Posterior cingulate gyrus (tissue), 11 donors: ENCODE measurements at regions of chrX and their contacts with region 1.

Region 1: GRCh38 chrX:138745196-138745595 is 33.7 kb upstream of the FGF13 start:
- DNase-seq: peak in 1 of 10 donors; percentile 2

Region 2: DNA sequence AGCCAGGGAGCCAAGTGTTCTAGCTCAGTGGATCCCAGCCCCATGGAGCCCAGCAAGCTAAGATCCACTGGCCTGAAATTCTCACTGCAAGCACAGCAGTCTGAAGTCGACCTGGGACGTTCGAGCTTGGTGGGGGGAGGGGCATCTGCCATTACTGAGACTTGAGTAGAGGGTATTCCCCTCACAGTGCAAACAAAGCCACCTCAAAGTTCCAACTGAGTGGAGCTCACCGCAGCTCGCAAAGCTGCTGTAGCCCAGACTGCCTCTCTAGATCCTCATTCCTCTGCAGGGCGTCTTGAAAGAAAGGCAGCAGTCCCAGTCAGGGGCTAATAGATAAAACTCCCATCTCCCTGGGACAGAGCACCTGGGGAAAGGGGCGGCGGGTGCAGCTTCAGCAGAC is 953.0 kb before region 1 on chrX:
- intact Hi-C with region 1: no loop called
- DNase-seq: peak in 1 of 10 donors; percentile 48

Region 3: GRCh38 chrX:138128027-138128671 is 617.0 kb before region 1 on chrX:
- intact Hi-C with region 1: loop called (anchors 5 kb)
- DNase-seq: peak in 2 of 10 donors; percentile 1 to 22

Region 4: DNA sequence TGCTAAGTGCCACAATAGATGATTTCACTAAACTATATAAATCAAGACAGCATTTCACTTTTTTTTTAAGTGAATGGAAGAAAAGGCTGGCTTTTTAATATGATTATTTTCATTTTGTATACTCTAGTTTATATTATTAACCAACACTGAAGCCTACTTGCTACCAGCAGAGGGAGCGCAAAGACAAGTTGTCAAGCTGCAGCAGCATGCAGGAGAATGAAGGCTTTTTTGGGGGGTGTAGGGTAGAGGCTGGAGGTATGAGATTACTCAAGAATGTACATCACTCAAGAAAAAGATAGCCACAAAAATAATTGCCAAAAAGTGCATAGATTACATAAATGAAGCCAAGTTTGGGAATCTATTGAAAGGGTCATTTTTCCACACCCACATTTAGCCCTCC is 553.2 kb before region 1 on chrX:
- intact Hi-C with region 1: loop called (anchors 5 kb)
- DNase-seq: peak in 5 of 10 donors; percentile 9 to 67 (median 23)

Region 5: DNA sequence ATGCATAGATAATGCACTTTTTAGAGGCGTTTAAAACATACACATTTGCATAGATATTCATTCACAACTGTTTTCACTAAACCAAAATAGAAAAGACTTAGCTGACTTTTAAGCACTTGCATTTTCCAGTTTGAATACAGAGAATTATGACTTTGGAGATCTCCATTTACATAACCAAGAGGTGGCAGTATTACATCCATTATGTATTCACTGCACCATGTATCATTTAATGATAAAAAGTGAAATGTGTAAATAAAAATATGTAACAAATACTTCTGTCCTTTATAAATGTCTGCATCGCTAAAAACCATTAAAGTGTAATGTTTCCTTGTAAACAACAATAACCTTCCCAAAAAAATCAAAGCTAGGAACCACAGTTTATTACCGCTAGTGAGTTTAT is 446.9 kb before region 1 on chrX:
- intact Hi-C with region 1: loop called (anchors 10 kb)
- DNase-seq: no peak

Region 6: DNA sequence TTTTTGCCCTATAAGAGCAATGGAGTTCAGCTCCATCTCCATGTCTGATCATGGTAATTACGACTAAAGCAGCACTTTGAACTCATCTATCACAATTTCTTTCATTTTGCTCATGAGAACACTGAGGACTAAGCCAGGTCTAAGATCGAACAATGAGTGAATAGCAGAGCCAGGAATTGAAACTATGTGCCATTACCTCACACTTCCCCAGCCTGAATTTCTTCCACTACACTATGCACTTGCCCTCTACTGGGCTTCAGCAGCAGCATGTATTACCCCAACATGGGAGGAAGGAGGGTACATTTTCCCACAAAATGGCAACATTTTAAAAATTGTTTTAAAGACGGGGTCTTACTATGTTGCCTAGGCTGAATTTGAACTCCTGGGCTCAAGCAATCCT is 241.0 kb after region 1 on chrX:
- intact Hi-C with region 1: no loop called
- DNase-seq: no peak